K562 (cell line): ENCODE measurements at regions of chr7 and their contacts with region 1.

Region 1: DNA sequence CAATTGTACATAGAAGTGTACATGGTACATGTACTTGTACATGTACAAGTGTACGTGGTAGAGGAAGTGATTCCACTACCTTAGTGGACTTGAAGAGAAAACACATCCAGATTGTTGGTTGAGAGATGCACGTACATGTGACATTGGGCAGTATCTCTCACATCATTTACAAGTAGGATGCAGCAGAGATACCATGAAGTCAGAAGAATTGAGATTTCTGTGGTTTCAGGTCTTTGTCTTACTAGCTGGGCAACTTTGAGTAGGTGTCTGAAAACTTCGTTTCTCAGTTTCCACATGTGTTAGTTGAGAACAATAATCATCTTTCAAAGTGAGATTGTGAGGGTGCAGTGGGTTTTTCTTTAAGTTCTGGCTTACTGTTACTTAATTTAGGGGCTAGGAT is 21.5 kb downstream of the CLDN12 start:
- DNase-seq: no peak
- ATAC-seq: no peak
- H3K4me3 ChIP-seq: no peak overlapping the region
- H3K27ac ChIP-seq: no peak overlapping the region
- H3K4me1 ChIP-seq: no peaks in the 10 kb centered on the region
- H3K27me3 ChIP-seq: no peaks in the 10 kb centered on the region; a peak in 1 of 5 replicates
- CTCF ChIP-seq: no peak
- EP300 ChIP-seq: no peak
- POLR2A ChIP-seq: no peak
- RAD21 ChIP-seq: no peak

Region 2: DNA sequence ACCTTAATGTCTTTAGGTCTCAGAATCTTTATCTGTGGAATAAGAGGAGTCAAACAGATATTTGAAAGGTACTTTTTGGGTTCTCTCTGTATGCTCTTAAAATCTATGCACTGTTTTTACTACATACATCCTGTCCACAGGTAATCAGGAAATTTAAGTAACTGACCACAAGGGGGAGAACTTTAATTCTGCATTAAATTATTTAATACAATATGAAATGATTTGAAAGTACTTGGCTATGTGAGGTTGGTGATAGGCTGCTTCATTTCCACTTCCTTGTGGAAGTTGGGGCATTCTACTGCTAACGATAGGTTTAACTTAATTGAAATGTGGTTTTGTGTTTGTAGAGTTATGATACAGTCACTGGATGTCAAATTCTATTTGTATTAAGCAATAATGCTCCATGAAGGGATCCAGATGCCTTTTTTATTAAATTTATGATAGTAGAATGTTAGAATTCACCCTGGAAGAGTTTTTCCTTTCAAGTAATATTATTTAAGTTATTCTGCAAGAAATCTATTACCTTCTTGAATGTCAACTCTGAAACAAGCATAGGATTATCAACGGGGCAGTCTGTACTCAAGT is 1635.1 kb before region 1 on chr7:
- CTCF ChIA-PET with region 1: no interaction called
- POLR2A ChIA-PET with region 1: no interaction called
- in situ Hi-C with region 1: no loop called
- intact Hi-C with region 1: loop called (anchors 1 kb)
- DNase-seq: peak in 2 of 4 experiments; percentile 9 to 15
- ATAC-seq: peak; percentile 62
- H3K4me3 ChIP-seq: no peak overlapping the region
- H3K27ac ChIP-seq: no peak overlapping the region
- H3K4me1 ChIP-seq: no peaks in the 10 kb centered on the region
- H3K27me3 ChIP-seq: no peaks in the 10 kb centered on the region
- CTCF ChIP-seq: peak; percentile 33 to 51 (median 36); a peak in 3 of 6 replicates
- EP300 ChIP-seq: no peak
- POLR2A ChIP-seq: no peak
- RAD21 ChIP-seq: peak; percentile 9 to 53; a peak in 2 of 4 replicates

Region 3: GRCh38 chr7:90155206-90155605 is 269.5 kb before region 1 on chr7:
- CTCF ChIA-PET with region 1: interaction called, 25 read pairs
- POLR2A ChIA-PET with region 1: interaction called, 3 read pairs
- in situ Hi-C with region 1: no loop called
- intact Hi-C with region 1: loop called (anchors 1 kb)
- DNase-seq: no peak
- ATAC-seq: no peak
- H3K4me3 ChIP-seq: no peak overlapping the region
- H3K27ac ChIP-seq: no peak overlapping the region
- H3K4me1 ChIP-seq: peaks cover 0 to 8% of the 10 kb centered on the region in 2 experiments; a peak in 2 of 5 replicates
- H3K27me3 ChIP-seq: no peaks in the 10 kb centered on the region
- CTCF ChIP-seq: no peak
- EP300 ChIP-seq: no peak
- POLR2A ChIP-seq: no peak
- RAD21 ChIP-seq: no peak

Region 4: DNA sequence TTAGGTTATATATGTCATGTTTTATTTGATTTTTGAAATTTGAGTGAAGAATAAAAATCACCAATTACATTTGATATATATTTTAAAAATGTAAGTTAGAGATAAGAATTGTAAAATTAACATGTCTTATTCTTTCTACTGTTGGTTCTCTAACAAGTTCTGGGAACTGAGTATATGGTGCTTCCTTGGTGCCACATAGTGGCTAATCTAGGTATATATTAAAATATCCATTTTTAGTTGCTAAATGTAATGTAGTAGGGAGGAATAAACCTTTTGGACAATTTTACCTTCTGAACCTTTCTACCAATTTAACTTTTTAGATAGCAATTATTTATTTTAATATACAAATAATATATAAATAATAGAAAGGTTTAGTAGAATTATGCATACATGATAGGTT is 162.3 kb before region 1 on chr7:
- CTCF ChIA-PET with region 1: no interaction called
- POLR2A ChIA-PET with region 1: no interaction called
- in situ Hi-C with region 1: no loop called
- intact Hi-C with region 1: loop called (anchors 2 kb)
- DNase-seq: peak; percentile 19 to 36 (median 30)
- ATAC-seq: peak; percentile 84
- H3K4me3 ChIP-seq: no peak overlapping the region
- H3K27ac ChIP-seq: no peak overlapping the region
- H3K4me1 ChIP-seq: no peaks in the 10 kb centered on the region
- H3K27me3 ChIP-seq: no peaks in the 10 kb centered on the region; a peak in 1 of 5 replicates
- CTCF ChIP-seq: peak in 2 of 3 experiments; percentile 35 to 69; a peak in 3 of 6 replicates
- EP300 ChIP-seq: no peak
- POLR2A ChIP-seq: no peak
- RAD21 ChIP-seq: peak; percentile 58 to 65

Region 5: GRCh38 chr7:90312745-90313144 is 112.0 kb before region 1 on chr7:
- CTCF ChIA-PET with region 1: interaction called, 3 read pairs
- POLR2A ChIA-PET with region 1: interaction called, 3 read pairs
- in situ Hi-C with region 1: no loop called
- intact Hi-C with region 1: loop called (anchors 2 kb)
- DNase-seq: peak in 1 of 4 experiments; percentile 11
- ATAC-seq: peak; percentile 67; the same call in 2 of the 3 replicates
- H3K4me3 ChIP-seq: no peak overlapping the region
- H3K27ac ChIP-seq: no peak overlapping the region
- H3K4me1 ChIP-seq: no peaks in the 10 kb centered on the region
- H3K27me3 ChIP-seq: no peaks in the 10 kb centered on the region; a peak in 1 of 5 replicates
- CTCF ChIP-seq: peak in 1 of 3 experiments; percentile 47; a peak in 3 of 6 replicates
- EP300 ChIP-seq: no peak
- POLR2A ChIP-seq: no peak
- RAD21 ChIP-seq: peak in 1 of 2 experiments; percentile 49; a peak in 1 of 4 replicates